ENCODE measurements at regions of chr3 and their contacts with region 1.

Region 1: GRCh38 chr3:40229963-40230362 is 79.5 kb upstream of the EIF1B start:
- DNase-seq: peak; percentile 42 to 87 (median 45)
- H3K4me3 ChIP-seq: peak overlapping the region in 1 of 3 experiments; percentile 26
- H3K4me3 Mint-ChIP-seq: peak overlapping the region in 1 of 2 donors; percentile 69
- H3K27ac ChIP-seq: peak overlapping the region; percentile 41 to 58
- H3K27ac Mint-ChIP-seq: peak overlapping the region; percentile 72 to 91 (median 83)
- H3K4me1 ChIP-seq: peaks cover 23 to 26% of the 10 kb centered on the region in 2 donors
- H3K4me1 Mint-ChIP-seq: peaks cover 23% of the 10 kb centered on the region
- H3K27me3 ChIP-seq: no peaks in the 10 kb centered on the region
- H3K27me3 Mint-ChIP-seq: no peaks in the 10 kb centered on the region
- CTCF ChIP-seq: no peak

Region 2: GRCh38 chr3:40035177-40035576 is 194.8 kb before region 1 on chr3:
- intact Hi-C with region 1: no loop called
- DNase-seq: no peak
- H3K4me3 ChIP-seq: no peak overlapping the region
- H3K4me3 Mint-ChIP-seq: no peak overlapping the region
- H3K27ac ChIP-seq: no peak overlapping the region
- H3K27ac Mint-ChIP-seq: no peak overlapping the region
- H3K4me1 ChIP-seq: no peaks in the 10 kb centered on the region
- H3K4me1 Mint-ChIP-seq: no peaks in the 10 kb centered on the region
- H3K27me3 ChIP-seq: no peaks in the 10 kb centered on the region
- H3K27me3 Mint-ChIP-seq: peaks cover 0 to 2% (median 2%) of the 10 kb centered on the region in 3 donors
- CTCF ChIP-seq: no peak

Region 3: GRCh38 chr3:40299721-40300335 is 69.9 kb after region 1 on chr3:
- intact Hi-C with region 1: loop called in 1 of 2 experiments (anchors 2 kb)
- DNase-seq: peak; percentile 90 to 99 (median 93)
- H3K4me3 ChIP-seq: peak overlapping the region in 1 of 3 experiments; percentile 37
- H3K4me3 Mint-ChIP-seq: peak overlapping the region; percentile 14 to 46
- H3K27ac ChIP-seq: peak overlapping the region in 1 of 2 donors; percentile 58
- H3K27ac Mint-ChIP-seq: peak overlapping the region; percentile 87 to 97 (median 91)
- H3K4me1 ChIP-seq: peaks cover 35 to 44% of the 10 kb centered on the region in 2 donors
- H3K4me1 Mint-ChIP-seq: peaks cover 45% of the 10 kb centered on the region
- H3K27me3 ChIP-seq: no peaks in the 10 kb centered on the region
- H3K27me3 Mint-ChIP-seq: peaks cover 0 to 1% (median 0%) of the 10 kb centered on the region in 3 donors
- CTCF ChIP-seq: no peak

Region 4: DNA sequence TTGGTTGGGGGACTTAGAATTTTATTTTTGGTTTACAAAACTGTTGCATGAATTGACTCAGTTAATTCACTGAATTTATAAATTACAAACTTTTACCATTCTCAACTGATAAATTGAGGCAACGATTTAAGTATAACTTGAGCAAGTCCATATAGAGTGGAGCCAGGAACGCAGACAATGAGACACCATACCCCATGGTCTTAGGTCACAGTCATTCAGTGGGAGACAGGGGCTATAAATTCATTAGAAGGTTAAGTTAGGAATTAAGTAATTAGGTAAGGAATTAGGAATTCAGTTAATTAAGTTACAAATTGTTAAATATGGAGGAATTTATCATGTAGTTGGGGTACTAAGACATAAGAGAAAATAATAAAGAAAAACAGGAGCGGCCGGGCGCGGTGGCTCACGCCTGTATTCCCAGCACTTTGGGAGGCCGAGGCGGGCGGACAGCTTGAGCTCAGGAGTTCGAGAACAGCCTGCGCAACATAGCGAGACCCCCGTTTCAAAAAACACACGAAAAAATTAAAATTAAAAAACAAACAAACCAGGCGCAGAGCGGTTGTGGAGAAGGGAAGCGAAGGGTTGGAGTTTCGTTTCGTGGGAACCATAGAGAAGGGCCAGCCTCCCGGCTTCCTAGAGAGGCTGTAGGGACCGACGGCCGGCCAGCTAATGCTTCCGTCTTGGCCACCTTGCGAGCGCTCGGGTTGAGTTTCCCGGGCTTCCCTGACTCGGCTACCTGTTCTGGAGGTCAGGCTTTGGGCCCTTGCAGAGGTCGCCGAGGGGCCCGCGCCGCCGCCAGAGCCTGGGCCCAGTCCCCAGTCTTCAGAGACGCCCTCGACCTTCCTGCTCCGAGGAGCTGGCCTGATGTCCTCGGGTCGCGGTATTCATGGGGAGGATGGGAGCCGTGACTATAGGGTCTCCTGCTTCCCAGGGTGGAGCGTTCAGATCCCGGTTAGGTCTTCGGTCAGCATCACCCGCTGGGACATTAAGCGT is 246.8 kb after region 1 on chr3 and contains the start of gene ZNF619:
- intact Hi-C with region 1: no loop called
- DNase-seq: peak; percentile 71 to 81 (median 75)
- H3K4me3 ChIP-seq: peak within 1 kb of the TSS; percentile 85 to 95 (median 86)
- H3K4me3 Mint-ChIP-seq: peak within 1 kb of the TSS; percentile 88 to 95
- H3K27ac ChIP-seq: peak within 1 kb of the TSS; percentile 56 to 95
- H3K27ac Mint-ChIP-seq: peak within 1 kb of the TSS; percentile 85 to 98 (median 97)
- H3K4me1 ChIP-seq: peaks cover 12 to 13% of the 10 kb centered on the region in 2 donors
- H3K4me1 Mint-ChIP-seq: peaks cover 16% of the 10 kb centered on the region
- H3K27me3 ChIP-seq: no peaks in the 10 kb centered on the region
- H3K27me3 Mint-ChIP-seq: peaks cover 0 to 3% (median 1%) of the 10 kb centered on the region in 3 donors
- CTCF ChIP-seq: no peak
- polyA plus RNA-seq, gene ZNF619: 1.6 to 3.4 (median 1.8) TPM

Measured in CD14-positive monocyte (primary cell).